IMR-90 (cell line): ENCODE measurements at regions of chr15 and their contacts with region 1.

Region 1: DNA sequence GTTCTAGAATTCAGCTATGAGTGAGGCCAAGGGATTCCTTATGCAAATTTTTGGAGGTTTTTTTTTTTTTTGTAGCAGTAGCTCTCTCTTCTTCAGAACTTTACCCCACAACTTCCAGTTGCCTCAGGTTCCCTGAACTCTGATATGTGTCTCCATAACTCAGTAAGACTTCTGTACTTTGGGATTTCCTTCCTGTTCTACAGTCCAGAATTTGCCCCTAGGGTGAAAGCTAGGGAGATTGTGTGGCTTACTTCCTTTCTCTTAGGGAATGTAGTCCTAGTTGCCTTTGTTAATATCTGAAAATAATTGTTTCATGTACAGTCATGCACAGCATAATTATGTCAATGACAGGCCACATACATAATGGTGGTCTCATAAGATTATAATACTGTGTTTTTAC is 30.8 kb downstream of the LRRC28 start:
- DNase-seq: no peak
- ATAC-seq: no peak
- H3K4me3 ChIP-seq: no peak overlapping the region
- H3K27ac ChIP-seq: no peak overlapping the region
- H3K4me1 ChIP-seq: no peaks in the 10 kb centered on the region; the same call in 1 of the 2 replicates
- H3K27me3 ChIP-seq: no peaks in the 10 kb centered on the region
- CTCF ChIP-seq: no peak
- POLR2A ChIP-seq: no peak
- RAD21 ChIP-seq: no peak

Region 2: DNA sequence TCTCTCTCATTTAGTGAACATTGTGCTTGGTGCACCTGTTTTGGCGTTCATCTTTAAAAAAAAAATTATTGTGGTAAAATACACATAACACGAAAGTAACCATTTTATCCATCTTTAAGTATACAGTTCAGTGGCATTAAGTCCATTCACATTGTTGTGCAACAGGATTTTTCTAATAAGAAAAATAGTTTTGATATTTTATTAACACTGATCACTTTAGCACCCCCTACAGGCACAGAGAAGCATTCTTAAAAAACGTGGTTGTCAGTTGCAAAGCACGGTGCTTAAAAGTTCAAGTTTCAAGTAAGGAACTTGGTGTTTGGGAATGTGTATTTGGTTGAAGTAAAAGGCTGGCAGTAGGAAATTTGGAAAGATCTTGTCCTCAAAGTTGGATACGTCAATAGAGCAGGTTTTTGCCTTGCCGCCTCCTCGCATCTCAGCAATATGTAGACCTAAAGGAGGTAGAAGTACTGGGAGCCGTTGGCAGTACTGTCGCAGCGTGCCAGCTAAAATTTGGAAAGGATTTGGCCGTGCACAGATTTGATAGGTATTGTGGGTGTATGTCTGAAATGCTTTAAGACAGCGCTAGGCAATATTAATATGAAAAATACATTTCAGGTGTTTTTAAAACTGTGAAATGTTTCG is 79.5 kb after region 1 on chr15:
- CTCF ChIA-PET with region 1: interaction called, 4 read pairs
- POLR2A ChIA-PET with region 1: no interaction called
- dilution Hi-C with region 1: no loop called
- in situ Hi-C with region 1: no loop called
- intact Hi-C with region 1: loop called (anchors 5 kb)
- DNase-seq: peak; percentile 42
- ATAC-seq: no peak
- H3K4me3 ChIP-seq: no peak overlapping the region
- H3K27ac ChIP-seq: no peak overlapping the region
- H3K4me1 ChIP-seq: no peaks in the 10 kb centered on the region
- H3K27me3 ChIP-seq: no peaks in the 10 kb centered on the region
- CTCF ChIP-seq: peak; percentile 51
- POLR2A ChIP-seq: no peak
- RAD21 ChIP-seq: peak; percentile 29

Region 3: DNA sequence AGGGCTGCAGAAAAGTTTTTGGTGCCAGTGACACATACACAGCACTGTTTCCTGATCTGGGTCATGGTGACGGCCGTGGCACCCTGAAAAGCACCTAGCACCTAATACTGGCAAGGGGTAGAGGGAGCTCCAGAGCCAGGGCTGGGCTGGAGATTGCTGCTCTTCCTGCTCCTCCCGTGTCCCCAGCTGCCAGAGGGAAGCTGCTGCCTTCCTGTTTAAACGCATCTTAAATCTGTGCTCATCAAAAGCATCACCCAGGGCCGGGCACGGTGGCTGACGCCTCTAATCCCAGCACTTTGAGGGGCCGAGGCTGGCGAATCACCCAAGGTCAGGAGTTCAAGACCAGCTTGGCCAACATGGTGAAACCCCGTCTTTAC is 127.0 kb after region 1 on chr15:
- CTCF ChIA-PET with region 1: no interaction called
- POLR2A ChIA-PET with region 1: no interaction called
- dilution Hi-C with region 1: no loop called
- in situ Hi-C with region 1: no loop called
- intact Hi-C with region 1: loop called (anchors 1 kb)
- DNase-seq: peak; percentile 60
- ATAC-seq: peak; percentile 61
- H3K4me3 ChIP-seq: no peak overlapping the region
- H3K27ac ChIP-seq: no peak overlapping the region
- H3K4me1 ChIP-seq: peaks cover 10% of the 10 kb centered on the region
- H3K27me3 ChIP-seq: no peaks in the 10 kb centered on the region
- CTCF ChIP-seq: peak; percentile 60
- POLR2A ChIP-seq: no peak
- RAD21 ChIP-seq: peak; percentile 76